Spleen (tissue), 13 donors: ENCODE measurements at regions of chr10 and their contacts with region 1.

Region 1: DNA sequence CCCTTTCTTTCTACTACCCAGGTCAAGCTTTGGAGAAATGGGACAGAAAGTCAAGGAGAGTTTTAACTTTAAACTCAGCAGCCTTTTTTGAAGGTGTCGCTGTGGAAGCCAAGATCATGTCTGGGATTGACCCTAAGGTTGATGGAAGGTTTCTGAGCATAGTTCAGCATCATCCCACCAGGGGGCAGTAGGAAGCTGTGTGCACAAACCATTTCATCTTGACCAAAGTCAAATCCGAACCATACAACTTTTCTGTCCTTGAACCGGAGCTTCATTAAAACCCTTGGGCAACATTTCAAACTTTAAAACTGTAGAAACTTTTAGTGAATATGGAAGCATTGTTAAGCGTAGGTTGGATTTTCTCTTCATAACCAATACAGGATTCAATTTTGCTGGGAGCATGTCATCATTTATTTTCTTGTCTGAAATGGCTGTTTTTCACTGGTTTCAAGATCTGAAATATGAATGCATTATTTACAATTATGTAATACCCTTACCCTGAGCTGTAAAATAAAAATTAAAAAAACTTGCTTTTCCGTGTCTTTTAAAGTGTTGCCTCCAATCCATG is 214.4 kb upstream of the KIAA1217 start:
- DNase-seq: no peak
- H3K4me3 ChIP-seq: no peak overlapping the region
- H3K27ac ChIP-seq: no peak overlapping the region
- H3K4me1 ChIP-seq: no peaks in the 10 kb centered on the region
- H3K27me3 ChIP-seq: no peaks in the 10 kb centered on the region
- CTCF ChIP-seq: peak in 8 of 11 experiments; percentile 54 to 73 (median 68)
- POLR2A ChIP-seq: no peak

Region 2: GRCh38 chr10:24197263-24197662 is 202.7 kb after region 1 on chr10:
- intact Hi-C with region 1: loop called (anchors 5 kb)
- DNase-seq: no peak
- H3K4me3 ChIP-seq: no peak overlapping the region
- H3K27ac ChIP-seq: no peak overlapping the region
- H3K4me1 ChIP-seq: peaks cover 0 to 4% (median 0%) of the 10 kb centered on the region in 6 donors
- H3K27me3 ChIP-seq: no peaks in the 10 kb centered on the region
- CTCF ChIP-seq: no peak
- POLR2A ChIP-seq: no peak

Region 3: GRCh38 chr10:24503461-24504320 is 509.1 kb after region 1 on chr10:
- intact Hi-C with region 1: loop called (anchors 10 kb)
- DNase-seq: no peak
- H3K4me3 ChIP-seq: no peak overlapping the region
- H3K27ac ChIP-seq: no peak overlapping the region
- H3K4me1 ChIP-seq: no peaks in the 10 kb centered on the region
- H3K27me3 ChIP-seq: no peaks in the 10 kb centered on the region
- CTCF ChIP-seq: peak in 8 of 11 experiments; percentile 11 to 44 (median 32)
- POLR2A ChIP-seq: no peak

Region 4: GRCh38 chr10:24724381-24725228 is 730.0 kb after region 1 on chr10:
- intact Hi-C with region 1: no loop called
- DNase-seq: peak; percentile 97
- H3K4me3 ChIP-seq: peak overlapping the region; percentile 68 to 90 (median 78)
- H3K27ac ChIP-seq: peak overlapping the region; percentile 39 to 94 (median 90)
- H3K4me1 ChIP-seq: peaks cover 16 to 45% (median 31%) of the 10 kb centered on the region in 6 donors
- H3K27me3 ChIP-seq: no peaks in the 10 kb centered on the region
- CTCF ChIP-seq: peak in 1 of 11 experiments; percentile 5
- POLR2A ChIP-seq: peak in 1 of 3 donors; percentile 90